ENCODE measurements at regions of chr1 and their contacts with region 1.

Region 1: GRCh38 chr1:169893494-169894362 is at the start of gene SCYL3:
- DNase-seq: peak; percentile 97
- total RNA-seq, gene SCYL3: 6.7 TPM

Region 2: GRCh38 chr1:169794530-169795416 is 99.0 kb before region 1 on chr1 and contains the start of gene METTL18:
- intact Hi-C with region 1: loop called (anchors 2 kb)
- DNase-seq: peak; percentile 96
- total RNA-seq, gene METTL18: 4.2 TPM

Region 3: DNA sequence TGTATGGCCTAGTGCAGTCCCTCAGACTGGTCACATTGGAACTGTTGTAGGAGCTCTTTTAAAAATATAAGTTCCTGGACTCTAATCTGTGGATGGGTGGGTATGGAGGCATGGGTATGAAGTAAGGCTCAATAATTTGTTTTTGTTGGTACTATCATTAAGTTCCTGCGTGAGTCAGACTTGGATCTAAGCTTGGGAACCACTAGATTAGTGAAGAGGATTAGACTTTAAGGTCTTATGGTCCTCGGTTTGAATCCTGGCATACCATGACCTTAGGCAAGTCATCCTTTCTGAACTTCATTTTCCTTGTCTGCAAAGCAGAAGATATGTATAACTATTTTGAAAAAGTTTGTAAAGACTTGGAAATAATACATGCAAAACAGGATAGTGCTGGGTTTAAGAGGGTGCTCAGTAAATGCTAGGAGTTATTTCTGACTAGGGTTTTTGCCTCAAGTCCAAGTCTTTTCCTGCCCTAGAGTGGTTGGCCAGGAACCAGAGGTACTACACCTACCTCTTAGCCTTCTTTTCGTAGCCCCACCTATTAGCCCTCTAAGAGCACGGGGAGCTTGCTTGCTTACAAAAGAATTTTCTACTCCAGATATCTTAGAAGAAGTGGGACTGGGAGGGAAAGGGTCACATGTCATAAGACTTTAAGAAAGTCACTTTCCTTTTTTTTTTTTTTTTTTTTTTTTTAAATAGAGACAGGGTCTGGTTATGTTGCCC is 60.4 kb before region 1 on chr1:
- intact Hi-C with region 1: no loop called
- DNase-seq: no peak

Region 4: GRCh38 chr1:170074250-170075157 is 180.8 kb after region 1 on chr1 and contains the start of gene KIFAP3:
- intact Hi-C with region 1: loop called (anchors 2 kb)
- DNase-seq: peak; percentile 98
- total RNA-seq, gene KIFAP3: 81.0 TPM